Ovary (tissue), 10 donors: ENCODE measurements at regions of chr3 and their contacts with region 1.

Region 1: DNA sequence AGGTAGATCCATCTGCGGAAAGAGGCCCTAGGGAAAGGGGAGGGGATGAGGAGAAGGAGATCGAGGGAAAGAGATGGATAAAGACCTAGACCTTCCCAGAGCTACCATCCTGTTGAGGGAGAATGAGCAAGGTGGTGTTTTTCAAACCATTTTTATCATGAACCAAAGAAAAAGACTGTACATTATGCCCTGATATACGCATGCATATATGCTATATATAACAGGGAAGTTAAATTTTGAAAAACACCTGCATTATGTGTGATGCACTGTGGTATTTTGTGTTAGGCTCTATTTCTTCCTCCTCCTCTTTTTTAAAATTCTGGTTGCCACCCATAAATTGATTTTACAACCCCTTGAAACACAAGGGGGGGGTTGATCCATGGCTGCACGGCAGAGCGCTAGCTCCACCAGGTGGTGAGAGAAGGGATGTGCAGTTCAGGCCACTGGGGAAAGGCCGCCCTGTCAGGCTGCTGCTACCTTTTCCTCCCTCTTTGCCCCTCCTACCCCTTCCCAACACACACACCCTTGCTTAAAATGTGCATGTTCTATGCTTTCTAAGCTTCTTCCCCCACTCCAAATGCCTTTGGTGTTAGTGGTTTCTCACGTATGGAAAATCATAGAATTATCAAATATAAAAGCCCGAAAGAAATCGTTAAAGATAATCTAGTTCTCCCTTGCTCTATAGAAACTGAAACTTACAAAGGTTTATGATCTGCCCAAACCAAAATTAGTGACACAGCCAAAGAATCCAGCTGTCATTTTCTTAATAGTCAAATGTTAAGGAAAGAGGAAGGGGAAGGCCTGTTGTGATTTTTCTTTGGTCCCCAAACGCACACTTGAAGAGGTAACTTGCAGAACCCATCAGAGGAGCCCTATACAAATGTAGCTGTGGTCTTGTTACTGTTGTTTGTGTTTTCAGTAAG is 262.0 kb upstream of the UMPS start:
- DNase-seq: peak in 3 of 5 donors; percentile 23 to 56 (median 42)
- H3K4me3 ChIP-seq: no peak overlapping the region
- H3K27ac ChIP-seq: no peak overlapping the region
- H3K4me1 ChIP-seq: no peaks in the 10 kb centered on the region
- H3K27me3 ChIP-seq: no peaks in the 10 kb centered on the region
- CTCF ChIP-seq: peak; percentile 48 to 74 (median 48)
- EP300 ChIP-seq: no peak
- POLR2A ChIP-seq: no peak

Region 2: DNA sequence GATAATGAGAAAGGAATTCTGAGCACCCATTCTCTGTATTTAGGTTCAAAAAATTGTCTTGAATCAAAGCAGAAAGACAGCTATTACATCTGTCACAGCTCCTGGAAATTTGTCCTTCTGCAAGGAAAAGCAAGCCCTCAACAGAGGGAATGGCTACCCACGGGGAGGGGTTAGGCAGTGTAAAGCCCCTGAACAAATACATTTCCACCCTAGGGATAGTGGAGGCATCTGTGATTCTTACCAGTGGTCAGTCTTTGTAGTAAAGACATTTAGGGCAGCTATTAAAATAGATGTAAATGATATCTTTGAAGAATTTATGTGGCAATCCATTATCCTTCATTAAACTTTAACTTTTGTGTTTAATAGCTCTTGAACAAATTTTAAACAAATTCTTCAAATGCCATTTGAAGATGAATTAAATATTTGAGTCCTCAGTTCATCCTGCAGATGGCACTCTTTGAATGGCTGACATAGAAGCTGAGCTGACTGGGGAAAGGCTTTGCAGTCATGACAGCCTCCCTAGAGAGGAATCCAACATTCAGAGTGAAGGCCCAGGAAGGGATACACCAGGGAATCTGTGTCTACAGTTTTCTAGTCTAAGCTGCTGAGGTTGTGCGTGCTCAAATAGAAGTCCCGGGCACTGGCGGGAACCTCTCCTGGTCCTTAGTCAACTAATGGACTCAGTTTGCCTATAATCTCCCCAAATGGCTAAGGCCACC is 116.7 kb before region 1 on chr3:
- intact Hi-C with region 1: loop called in 1 of 4 experiments (anchors 2 kb)
- DNase-seq: no peak
- H3K4me3 ChIP-seq: no peak overlapping the region
- H3K27ac ChIP-seq: no peak overlapping the region
- H3K4me1 ChIP-seq: no peaks in the 10 kb centered on the region
- H3K27me3 ChIP-seq: no peaks in the 10 kb centered on the region
- CTCF ChIP-seq: peak in 1 of 3 donors; percentile 42
- EP300 ChIP-seq: no peak
- POLR2A ChIP-seq: no peak

Region 3: GRCh38 chr3:124504332-124505059 is 36.3 kb after region 1 on chr3:
- intact Hi-C with region 1: no loop called
- DNase-seq: no peak
- H3K4me3 ChIP-seq: no peak overlapping the region
- H3K27ac ChIP-seq: no peak overlapping the region
- H3K4me1 ChIP-seq: no peaks in the 10 kb centered on the region
- H3K27me3 ChIP-seq: no peaks in the 10 kb centered on the region
- CTCF ChIP-seq: no peak
- EP300 ChIP-seq: no peak
- POLR2A ChIP-seq: no peak